Upper lobe of right lung (tissue), 1 donor: ENCODE measurements at regions of chr20 and their contacts with region 1.

Region 1: DNA sequence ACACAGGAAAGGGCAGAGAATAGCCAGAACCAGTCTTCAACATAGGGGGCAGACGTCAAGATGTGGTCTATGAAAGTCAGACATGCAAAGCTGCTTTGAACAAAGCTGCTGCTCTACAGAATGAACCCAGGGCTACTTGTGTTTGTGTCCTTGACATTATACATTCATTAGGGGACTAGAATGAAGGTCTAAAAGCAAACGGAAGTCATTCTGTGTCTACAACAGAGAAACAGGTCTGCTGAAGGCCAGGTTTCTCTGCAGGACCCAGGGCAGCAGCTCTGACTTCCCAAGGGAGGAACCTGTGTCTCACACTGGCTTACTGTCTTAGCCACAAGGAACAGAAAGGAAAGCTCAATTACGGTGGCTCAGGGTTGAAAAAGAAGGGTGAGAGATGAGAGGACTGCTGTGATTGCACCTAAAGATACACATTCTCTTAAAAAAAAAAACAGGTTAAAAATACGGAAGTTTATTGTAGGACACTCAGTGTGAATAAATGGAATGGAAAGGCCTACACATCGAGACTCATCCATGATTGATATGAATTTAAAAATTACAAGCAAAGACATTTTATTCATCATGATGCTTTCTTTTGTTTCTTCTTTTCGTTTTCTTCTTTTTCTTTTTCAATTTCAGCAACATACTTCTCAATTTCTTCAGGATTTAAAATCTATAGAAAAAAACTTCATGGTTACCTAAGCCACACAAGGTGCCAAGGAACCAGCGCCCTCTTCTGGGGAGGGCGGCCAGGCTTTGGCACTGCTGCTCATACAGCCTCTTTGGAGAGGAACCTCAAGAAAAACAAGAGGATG is 6.7 kb downstream of the PSMA7 start:
- DNase-seq: peak; percentile 82
- ATAC-seq: peak; percentile 60
- H3K4me3 ChIP-seq: no peak overlapping the region
- H3K27ac ChIP-seq: no peak overlapping the region
- H3K4me1 ChIP-seq: peaks cover 30% of the 10 kb centered on the region
- H3K27me3 ChIP-seq: no peaks in the 10 kb centered on the region
- CTCF ChIP-seq: peak; percentile 78

Region 2: DNA sequence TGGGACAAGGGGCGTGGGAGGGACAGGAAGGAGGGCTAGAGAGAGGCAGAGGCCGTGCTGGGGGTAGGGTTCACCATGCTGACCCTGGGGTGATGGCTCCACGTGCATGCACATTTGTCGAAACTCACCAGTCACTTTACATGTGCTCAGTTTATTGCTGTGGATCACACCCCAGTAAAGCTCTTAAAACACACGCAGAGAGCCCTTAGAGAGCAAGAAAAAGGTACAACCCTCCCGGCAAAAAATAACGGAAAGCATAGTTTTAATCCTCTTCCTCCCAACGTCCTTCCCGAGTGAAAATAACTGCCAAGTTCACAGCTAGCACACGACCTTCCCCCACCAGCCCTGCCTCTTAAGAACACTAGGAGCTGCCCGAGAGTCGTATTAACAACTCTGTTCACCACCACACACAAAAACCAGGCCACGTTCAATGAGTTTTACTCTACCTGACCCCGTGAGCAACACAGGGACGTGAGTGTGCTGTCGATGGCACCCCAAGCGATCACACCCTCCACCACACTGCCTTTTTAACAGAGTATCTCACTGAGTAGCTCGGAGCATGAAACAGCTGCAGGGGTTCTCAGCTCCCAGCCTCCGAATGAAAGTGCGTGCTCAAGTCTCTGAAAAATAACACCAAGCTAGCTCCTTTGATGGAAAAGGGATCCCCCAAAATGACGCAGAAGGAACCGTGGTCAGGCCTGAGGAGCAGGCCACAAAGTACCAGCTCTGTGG is 110.5 kb before region 1 on chr20:
- intact Hi-C with region 1: loop called (anchors 10 kb)
- DNase-seq: no peak
- ATAC-seq: peak; percentile 54
- H3K4me3 ChIP-seq: no peak overlapping the region
- H3K27ac ChIP-seq: no peak overlapping the region
- H3K4me1 ChIP-seq: peaks cover 29% of the 10 kb centered on the region
- H3K27me3 ChIP-seq: no peaks in the 10 kb centered on the region
- CTCF ChIP-seq: peak; percentile 52